ENCODE measurements at regions of chr22 and their contacts with region 1.

Region 1: DNA sequence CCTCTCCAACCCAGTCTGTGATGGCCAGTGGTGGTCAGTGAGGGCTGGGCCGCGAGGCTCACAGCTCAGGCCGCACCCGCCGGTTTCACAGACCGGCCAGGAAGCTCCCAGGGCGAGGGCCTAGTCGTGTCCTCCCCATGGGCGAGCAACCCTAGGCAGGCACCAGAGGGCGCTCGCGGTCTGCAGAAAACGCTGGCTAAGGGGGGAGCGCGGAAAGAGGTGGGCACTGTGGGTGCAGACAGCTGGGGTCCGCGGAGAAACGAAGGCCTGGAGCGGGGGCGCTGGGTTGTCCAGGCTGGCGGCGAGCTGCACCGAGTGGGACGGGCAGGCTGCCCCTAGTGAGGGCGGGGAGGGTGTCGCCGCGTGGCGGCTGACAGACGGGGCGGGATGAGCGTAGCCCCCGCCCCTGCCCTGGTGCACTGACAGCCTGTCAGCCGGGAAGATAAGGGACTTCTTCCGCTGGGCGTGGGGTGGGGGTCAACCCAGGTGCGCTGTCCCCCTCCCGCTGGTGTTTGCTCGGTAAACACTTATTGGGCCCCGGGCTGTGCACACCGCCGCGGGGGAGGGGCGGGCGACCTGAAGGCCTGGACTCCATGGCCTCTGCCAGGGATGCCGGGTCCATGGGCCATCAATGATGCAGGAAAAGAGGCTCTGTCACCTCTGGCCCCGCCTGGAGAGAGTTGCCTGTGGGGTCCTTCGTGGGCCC is 7.5 kb downstream of the GP1BB start:
- DNase-seq: peak; percentile 83 to 90
- H3K4me3 ChIP-seq: peak overlapping the region; percentile 52
- H3K4me3 Mint-ChIP-seq: peak overlapping the region; percentile 79
- H3K27ac Mint-ChIP-seq: no peak overlapping the region
- H3K4me1 ChIP-seq: peaks cover 13% of the 10 kb centered on the region
- H3K4me1 Mint-ChIP-seq: no peaks in the 10 kb centered on the region
- H3K27me3 ChIP-seq: no peaks in the 10 kb centered on the region
- H3K27me3 Mint-ChIP-seq: peaks cover 11% of the 10 kb centered on the region
- CTCF ChIP-seq: peak; percentile 89 to 93

Region 2: DNA sequence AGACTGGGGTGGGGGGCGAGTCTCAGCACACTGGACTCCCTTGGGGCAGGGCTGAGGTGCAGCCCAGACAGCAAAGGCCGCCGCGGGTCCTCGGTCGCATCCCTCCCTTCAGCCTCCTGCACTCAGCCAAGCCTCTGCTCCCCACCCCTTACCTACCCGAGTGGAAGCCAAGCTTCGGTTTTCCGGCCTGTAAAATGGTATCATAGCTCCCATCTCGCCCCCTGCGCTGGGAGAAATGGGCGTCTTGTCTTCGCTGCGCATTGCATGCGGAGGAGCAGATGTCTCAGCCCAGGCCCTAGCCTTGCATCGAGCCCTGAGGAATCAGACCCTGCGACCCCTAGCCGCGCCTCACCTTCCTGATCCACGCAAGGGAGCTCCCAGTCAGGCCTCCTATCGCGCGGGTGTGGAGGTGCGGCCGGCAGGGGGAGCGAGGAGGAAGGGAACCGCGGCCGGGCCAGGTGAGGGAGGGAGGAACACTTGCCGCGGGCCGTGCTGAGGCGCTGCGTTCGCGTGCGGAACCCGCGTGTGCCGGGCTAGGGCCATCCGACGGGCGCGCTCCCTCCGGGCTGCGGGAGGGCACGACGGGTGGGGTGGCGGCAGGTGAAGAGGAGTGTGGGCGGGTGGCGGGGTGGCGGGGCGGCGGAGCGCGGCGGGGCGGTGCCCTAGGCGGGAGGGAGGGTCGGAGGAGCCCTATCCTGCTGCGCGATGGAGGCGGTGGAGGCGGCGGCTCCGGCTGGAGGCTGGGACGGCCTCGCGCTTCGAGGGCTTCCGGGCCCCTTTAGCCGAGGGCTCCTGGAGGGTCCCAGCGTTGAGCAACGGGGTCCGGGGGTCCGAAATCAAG is 25.7 kb after region 1 on chr22:
- CTCF ChIA-PET with region 1: interaction called, 21 read pairs
- POLR2A ChIA-PET with region 1: no interaction called
- intact Hi-C with region 1: loop called (anchors 1 kb)
- DNase-seq: peak; percentile 76 to 83
- H3K4me3 ChIP-seq: peak overlapping the region; percentile 35
- H3K4me3 Mint-ChIP-seq: peak overlapping the region; percentile 67
- H3K27ac Mint-ChIP-seq: no peak overlapping the region
- H3K4me1 ChIP-seq: peaks cover 18% of the 10 kb centered on the region
- H3K4me1 Mint-ChIP-seq: peaks cover 17% of the 10 kb centered on the region
- H3K27me3 ChIP-seq: no peaks in the 10 kb centered on the region; the same call in 1 of the 2 replicates
- H3K27me3 Mint-ChIP-seq: peaks cover 7% of the 10 kb centered on the region
- CTCF ChIP-seq: peak; percentile 66 to 82

Region 3: GRCh38 chr22:19779685-19780268 is 49.0 kb after region 1 on chr22:
- CTCF ChIA-PET with region 1: no interaction called
- POLR2A ChIA-PET with region 1: no interaction called
- intact Hi-C with region 1: loop called (anchors 1 kb)
- DNase-seq: no peak
- H3K4me3 ChIP-seq: no peak overlapping the region
- H3K4me3 Mint-ChIP-seq: no peak overlapping the region
- H3K27ac Mint-ChIP-seq: no peak overlapping the region
- H3K4me1 ChIP-seq: no peaks in the 10 kb centered on the region
- H3K4me1 Mint-ChIP-seq: no peaks in the 10 kb centered on the region
- H3K27me3 ChIP-seq: no peaks in the 10 kb centered on the region
- H3K27me3 Mint-ChIP-seq: no peaks in the 10 kb centered on the region
- CTCF ChIP-seq: no peak

Region 4: DNA sequence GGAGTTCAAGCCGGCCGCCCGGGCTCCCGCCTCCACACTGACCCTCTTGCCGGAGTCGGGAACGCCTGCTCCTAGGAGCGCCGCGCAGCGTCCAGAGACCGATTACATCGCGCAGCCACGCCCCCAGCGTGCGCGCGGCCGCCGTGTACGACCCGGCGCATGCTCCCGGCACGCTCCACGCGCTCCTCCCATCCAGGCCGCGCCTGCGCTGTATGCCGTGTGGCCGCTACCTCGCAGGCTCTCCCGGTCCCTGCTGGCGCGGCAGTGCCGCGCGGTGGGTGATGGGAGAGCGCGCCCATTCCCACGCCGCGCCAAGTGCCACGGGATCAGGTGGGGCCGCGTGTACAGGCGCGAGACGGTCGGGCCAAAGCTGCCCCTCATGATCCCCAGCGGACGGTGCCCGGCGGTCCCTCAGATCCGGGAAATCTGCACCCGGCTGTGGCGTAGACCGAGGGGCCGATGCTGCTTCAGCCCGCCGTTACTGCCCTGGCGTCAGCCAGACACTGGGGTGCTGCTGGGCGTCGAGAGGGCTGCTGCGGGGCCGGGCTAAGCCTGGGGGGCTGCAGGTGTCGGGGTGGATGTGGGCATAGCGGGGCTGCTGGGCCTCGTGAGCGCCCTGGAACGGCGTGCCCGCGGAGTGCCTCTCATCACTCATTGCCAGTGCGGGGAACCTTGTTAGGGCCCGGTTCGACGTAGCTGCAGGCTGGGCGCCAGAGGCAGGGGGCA is 124.1 kb after region 1 on chr22 and contains the starts of genes GNB1L and RTL10:
- CTCF ChIA-PET with region 1: interaction called, 9 read pairs
- POLR2A ChIA-PET with region 1: no interaction called
- intact Hi-C with region 1: loop called (anchors 2 kb)
- DNase-seq: peak; percentile 95 to 96
- H3K4me3 ChIP-seq: peak within 1 kb of the TSS; percentile 87
- H3K4me3 Mint-ChIP-seq: peak within 1 kb of the TSS; percentile 95
- H3K27ac Mint-ChIP-seq: peak within 1 kb of the TSS; percentile 87
- H3K4me1 ChIP-seq: peaks cover 38% of the 10 kb centered on the region
- H3K4me1 Mint-ChIP-seq: peaks cover 29% of the 10 kb centered on the region
- H3K27me3 ChIP-seq: no peaks in the 10 kb centered on the region
- H3K27me3 Mint-ChIP-seq: no peaks in the 10 kb centered on the region
- CTCF ChIP-seq: no peak
- total RNA-seq, gene GNB1L: 13.4 and 15.8 TPM in 2 replicates
- total RNA-seq, gene RTL10: 27.5 and 29.7 TPM in 2 replicates

Region 5: GRCh38 chr22:19874307-19875060 is 143.7 kb after region 1 on chr22:
- CTCF ChIA-PET with region 1: no interaction called
- POLR2A ChIA-PET with region 1: no interaction called
- intact Hi-C with region 1: no loop called
- DNase-seq: peak in 1 of 2 experiments; percentile 31
- H3K4me3 ChIP-seq: no peak overlapping the region
- H3K4me3 Mint-ChIP-seq: no peak overlapping the region
- H3K27ac Mint-ChIP-seq: no peak overlapping the region
- H3K4me1 ChIP-seq: no peaks in the 10 kb centered on the region
- H3K4me1 Mint-ChIP-seq: no peaks in the 10 kb centered on the region
- H3K27me3 ChIP-seq: no peaks in the 10 kb centered on the region
- H3K27me3 Mint-ChIP-seq: no peaks in the 10 kb centered on the region
- CTCF ChIP-seq: no peak

Region 6: DNA sequence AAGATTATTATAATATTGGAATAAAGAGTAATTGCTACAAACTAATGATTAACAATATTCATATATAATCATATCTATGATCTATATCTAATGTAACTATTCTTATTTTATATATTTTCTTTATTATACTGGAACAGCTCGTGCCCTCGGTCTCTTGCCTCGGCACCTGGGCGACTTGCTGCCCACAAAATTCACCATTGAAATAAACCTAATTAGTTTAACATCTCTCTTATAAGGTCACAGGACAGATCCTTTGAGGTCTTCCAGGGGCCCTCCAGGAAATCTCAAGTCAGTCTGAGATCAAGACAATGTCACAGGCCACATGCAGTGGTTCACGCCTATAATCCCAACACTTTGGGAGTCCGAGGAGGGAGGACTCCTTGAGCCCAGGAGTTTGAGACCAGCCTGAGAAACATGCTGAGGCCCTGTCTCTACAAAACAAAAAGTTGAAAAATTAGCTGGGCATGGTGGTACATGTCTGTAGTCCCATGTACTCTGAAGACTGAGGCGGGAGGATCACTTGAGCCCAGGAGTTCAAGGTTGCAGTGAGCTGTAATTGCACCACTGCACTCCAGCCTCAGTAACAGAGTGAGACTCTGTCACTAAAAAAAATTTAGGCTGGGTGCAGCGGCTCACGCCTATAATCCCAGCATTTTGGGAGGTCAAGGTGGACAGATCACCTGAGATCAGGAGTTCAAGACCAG is 217.4 kb after region 1 on chr22:
- CTCF ChIA-PET with region 1: interaction called, 11 read pairs
- POLR2A ChIA-PET with region 1: no interaction called
- intact Hi-C with region 1: no loop called
- DNase-seq: no peak
- H3K4me3 ChIP-seq: no peak overlapping the region
- H3K4me3 Mint-ChIP-seq: no peak overlapping the region
- H3K27ac Mint-ChIP-seq: no peak overlapping the region
- H3K4me1 ChIP-seq: peaks cover 6% of the 10 kb centered on the region
- H3K4me1 Mint-ChIP-seq: peaks cover 14% of the 10 kb centered on the region
- H3K27me3 ChIP-seq: no peaks in the 10 kb centered on the region
- H3K27me3 Mint-ChIP-seq: no peaks in the 10 kb centered on the region
- CTCF ChIP-seq: no peak